ENCODE measurements at regions of chr17 and their contacts with region 1.

Region 1: GRCh38 chr17:13002766-13003451 is 14.9 kb downstream of the ELAC2 start:
- DNase-seq: peak; percentile 77
- ATAC-seq: peak; percentile 95
- H3K4me3 ChIP-seq: no peak overlapping the region
- H3K27ac ChIP-seq: no peak overlapping the region
- H3K4me1 ChIP-seq: no peaks in the 10 kb centered on the region
- H3K27me3 ChIP-seq: no peaks in the 10 kb centered on the region
- CTCF ChIP-seq: peak; percentile 83
- POLR2A ChIP-seq: no peak
- RAD21 ChIP-seq: peak; percentile 88

Region 2: DNA sequence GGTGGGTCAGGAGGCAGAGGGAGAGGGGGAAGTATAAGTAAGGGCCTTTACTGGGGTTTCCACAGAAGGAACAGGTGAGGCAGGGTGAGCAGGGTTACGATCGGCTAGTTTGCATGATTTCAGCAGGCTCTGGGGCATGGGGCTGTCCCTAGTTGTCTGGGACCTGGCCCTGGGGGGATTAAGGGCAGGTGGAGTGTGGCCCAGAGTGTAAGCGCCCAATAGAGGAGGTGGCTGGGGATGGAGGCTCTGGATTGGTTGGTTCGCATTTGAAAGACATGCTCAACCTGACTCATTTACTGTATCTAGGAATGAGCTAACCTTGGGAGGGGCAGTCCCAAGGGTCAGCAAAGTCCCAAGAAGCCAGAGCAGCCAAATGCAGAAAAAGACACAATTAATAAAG is 751.9 kb before region 1 on chr17:
- CTCF ChIA-PET with region 1: no interaction called
- POLR2A ChIA-PET with region 1: no interaction called
- dilution Hi-C with region 1: no loop called
- in situ Hi-C with region 1: loop called (anchors 5 kb)
- intact Hi-C with region 1: loop called (anchors 1 kb)
- DNase-seq: no peak
- ATAC-seq: no peak
- H3K4me3 ChIP-seq: no peak overlapping the region
- H3K27ac ChIP-seq: no peak overlapping the region
- H3K4me1 ChIP-seq: peaks cover 4% of the 10 kb centered on the region
- H3K27me3 ChIP-seq: peaks cover 2% of the 10 kb centered on the region; the same call in 1 of the 2 replicates
- CTCF ChIP-seq: no peak
- POLR2A ChIP-seq: no peak
- RAD21 ChIP-seq: no peak

Region 3: GRCh38 chr17:12545877-12546513 is 456.9 kb before region 1 on chr17:
- CTCF ChIA-PET with region 1: no interaction called
- POLR2A ChIA-PET with region 1: no interaction called
- dilution Hi-C with region 1: no loop called
- in situ Hi-C with region 1: no loop called
- intact Hi-C with region 1: loop called (anchors 2 kb)
- DNase-seq: peak; percentile 63
- ATAC-seq: peak; percentile 88
- H3K4me3 ChIP-seq: no peak overlapping the region
- H3K27ac ChIP-seq: no peak overlapping the region
- H3K4me1 ChIP-seq: peaks cover 4% of the 10 kb centered on the region; the same call in 1 of the 2 replicates
- H3K27me3 ChIP-seq: no peaks in the 10 kb centered on the region
- CTCF ChIP-seq: peak; percentile 70
- POLR2A ChIP-seq: no peak
- RAD21 ChIP-seq: peak; percentile 75

Region 4: GRCh38 chr17:13171790-13172189 is 168.9 kb after region 1 on chr17:
- CTCF ChIA-PET with region 1: no interaction called
- POLR2A ChIA-PET with region 1: no interaction called
- dilution Hi-C with region 1: no loop called
- in situ Hi-C with region 1: no loop called
- intact Hi-C with region 1: no loop called
- DNase-seq: no peak
- ATAC-seq: no peak
- H3K4me3 ChIP-seq: no peak overlapping the region
- H3K27ac ChIP-seq: no peak overlapping the region
- H3K4me1 ChIP-seq: no peaks in the 10 kb centered on the region
- H3K27me3 ChIP-seq: no peaks in the 10 kb centered on the region
- CTCF ChIP-seq: no peak
- POLR2A ChIP-seq: no peak
- RAD21 ChIP-seq: no peak

Measured in IMR-90 (cell line).